Body of pancreas (tissue), 4 donors: ENCODE measurements at regions of chr16 and their contacts with region 1.

Region 1: GRCh38 chr16:28538733-28539596 is at the start of gene NUPR1:
- DNase-seq: peak; percentile 96 to 99 (median 98)
- ATAC-seq: peak; percentile 95
- H3K4me3 ChIP-seq: peak within 1 kb of the TSS; percentile 13 to 16
- H3K27ac ChIP-seq: peak within 1 kb of the TSS; percentile 78 to 93 (median 90)
- H3K4me1 ChIP-seq: peaks cover 47% of the 10 kb centered on the region
- H3K27me3 ChIP-seq: no peaks in the 10 kb centered on the region
- CTCF ChIP-seq: no peak
- POLR2A ChIP-seq: peak; percentile 86 to 97 (median 95)
- total RNA-seq, gene NUPR1: 32.0 to 92.4 TPM

Region 2: DNA sequence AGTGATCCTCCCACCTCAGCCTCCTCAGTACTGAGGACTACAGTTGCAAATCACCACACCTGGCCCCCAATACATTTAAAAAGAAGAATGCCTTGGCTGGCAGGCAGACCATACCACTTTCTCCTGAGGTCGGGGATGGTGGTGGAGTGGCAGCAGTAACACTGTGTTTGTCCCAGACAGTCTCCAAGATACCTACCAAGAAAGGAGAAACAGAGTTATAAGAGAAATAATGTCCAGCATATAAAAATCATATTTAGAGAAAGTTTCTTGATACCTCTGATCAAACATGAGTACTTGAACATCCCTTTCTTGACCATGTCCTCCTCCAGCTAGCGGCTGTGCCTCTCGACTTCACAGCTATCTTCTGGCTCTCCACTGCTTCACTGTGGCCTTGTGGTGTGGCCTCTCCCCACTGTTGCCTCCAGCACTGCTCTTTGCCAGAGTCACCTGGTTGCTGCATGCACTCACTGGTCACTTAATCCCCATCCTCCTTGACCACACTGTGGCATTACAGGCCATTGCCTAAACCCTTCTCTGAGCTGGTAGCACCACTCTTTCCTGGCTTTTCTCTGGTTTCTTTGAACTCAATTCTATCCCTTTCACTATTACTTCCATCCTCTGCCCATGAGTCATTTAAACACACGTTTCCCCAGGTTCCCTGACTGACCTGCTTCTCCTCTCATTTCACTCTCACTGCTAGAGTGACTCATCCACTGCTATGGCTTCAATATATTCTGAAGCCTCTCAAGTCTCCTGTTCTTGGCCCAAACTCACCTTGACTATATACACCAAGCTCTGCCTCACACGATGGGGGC is 372.4 kb before region 1 on chr16:
- intact Hi-C with region 1: no loop called
- DNase-seq: no peak
- ATAC-seq: no peak
- H3K4me3 ChIP-seq: no peak overlapping the region
- H3K27ac ChIP-seq: no peak overlapping the region
- H3K4me1 ChIP-seq: no peaks in the 10 kb centered on the region
- H3K27me3 ChIP-seq: no peaks in the 10 kb centered on the region
- CTCF ChIP-seq: no peak
- POLR2A ChIP-seq: no peak

Region 3: DNA sequence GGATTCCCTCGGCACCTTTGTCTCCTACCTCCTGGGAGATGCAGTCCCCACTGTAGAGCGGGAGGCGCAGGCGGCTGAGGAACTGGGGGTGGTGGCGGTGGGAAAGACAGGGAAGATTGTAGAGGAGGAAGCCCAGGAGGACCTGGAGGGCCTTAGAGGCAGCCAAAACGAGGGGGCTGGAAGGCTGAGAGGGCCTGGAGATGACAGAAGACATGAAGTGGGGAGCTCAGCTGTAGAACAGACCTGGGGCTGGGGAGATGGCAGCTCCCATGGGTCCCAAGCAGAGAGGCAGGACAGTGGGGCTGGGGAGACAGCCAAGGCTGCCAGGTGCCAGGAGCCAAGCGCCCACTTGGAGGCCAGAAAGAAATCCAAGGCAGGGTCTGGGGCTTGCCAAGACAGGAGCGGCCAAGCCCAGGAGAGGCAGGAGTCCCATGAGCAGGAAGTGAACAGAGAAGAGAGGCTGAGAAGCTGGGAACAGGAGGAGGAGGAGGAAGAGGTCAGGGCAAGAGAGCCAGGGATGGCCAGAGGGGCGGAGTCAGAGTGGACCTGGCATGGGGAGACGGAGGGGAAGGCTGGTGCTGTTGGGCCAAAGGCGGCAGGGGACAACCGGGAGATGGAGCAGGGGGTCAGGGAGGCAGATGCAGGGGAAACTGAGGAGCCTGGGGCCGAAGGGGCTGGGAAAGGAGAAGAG is 43.7 kb before region 1 on chr16:
- intact Hi-C with region 1: loop called (anchors 5 kb)
- DNase-seq: no peak
- ATAC-seq: no peak
- H3K4me3 ChIP-seq: no peak overlapping the region
- H3K27ac ChIP-seq: peak overlapping the region in 2 of 4 donors; percentile 36 to 71
- H3K4me1 ChIP-seq: peaks cover 4% of the 10 kb centered on the region
- H3K27me3 ChIP-seq: no peaks in the 10 kb centered on the region
- CTCF ChIP-seq: no peak
- POLR2A ChIP-seq: no peak